ENCODE measurements at regions of chr3 and their contacts with region 1.

Region 1: GRCh38 chr3:112642912-112643506 is 2.1 kb upstream of the CCDC80 start:
- DNase-seq: peak; percentile 92
- ATAC-seq: peak; percentile 67
- H3K4me3 ChIP-seq: no peak overlapping the region
- H3K27ac ChIP-seq: 0 out of 2 replicates have a peak overlapping the region, but pooled peaks have one; percentile 32
- H3K4me1 ChIP-seq: peaks cover 38% of the 10 kb centered on the region
- H3K27me3 ChIP-seq: no peaks in the 10 kb centered on the region
- CTCF ChIP-seq: peak; percentile 98
- POLR2A ChIP-seq: peak; percentile 66; the same call in 1 of the 2 replicates
- RAD21 ChIP-seq: peak; percentile 99

Region 2: DNA sequence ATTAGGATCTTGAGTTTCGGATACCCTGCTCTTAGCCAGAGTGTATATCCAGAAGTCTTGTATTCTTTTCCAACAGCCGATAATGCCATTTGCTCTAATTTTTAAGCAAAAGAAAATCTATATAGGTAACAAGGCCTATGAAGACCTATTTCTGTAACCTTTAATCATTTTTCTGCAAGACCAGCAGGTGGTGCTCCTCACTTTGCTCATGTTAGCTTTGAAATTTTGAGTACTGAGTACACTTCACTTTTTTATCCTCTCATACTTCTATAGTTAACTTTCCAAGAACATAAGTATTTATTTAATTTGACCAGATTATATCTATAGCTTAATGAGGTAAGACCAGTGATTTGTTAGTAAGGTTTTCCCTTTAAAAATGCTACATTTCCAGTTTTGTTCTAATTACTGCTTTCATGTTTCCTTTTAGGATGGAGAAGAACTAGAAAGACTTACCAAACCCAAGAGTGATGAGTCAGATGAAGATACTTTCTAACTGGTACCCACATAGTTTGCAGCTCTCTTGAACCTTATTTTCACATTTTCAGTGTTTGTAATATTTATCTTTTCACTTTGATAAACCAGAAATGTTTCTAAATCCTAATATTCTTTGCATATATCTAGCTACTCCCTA is 60.6 kb before region 1 on chr3:
- CTCF ChIA-PET with region 1: interaction called, 15 read pairs
- POLR2A ChIA-PET with region 1: interaction called, 4 read pairs
- dilution Hi-C with region 1: no loop called
- in situ Hi-C with region 1: loop called (anchors 5 kb)
- intact Hi-C with region 1: loop called (anchors 2 kb)
- DNase-seq: peak; percentile 80
- ATAC-seq: peak; percentile 80
- H3K4me3 ChIP-seq: no peak overlapping the region
- H3K27ac ChIP-seq: no peak overlapping the region
- H3K4me1 ChIP-seq: peaks cover 4% of the 10 kb centered on the region
- H3K27me3 ChIP-seq: no peaks in the 10 kb centered on the region
- CTCF ChIP-seq: peak; percentile 69
- POLR2A ChIP-seq: no peak
- RAD21 ChIP-seq: peak; percentile 80

Region 3: GRCh38 chr3:112685420-112685819 is 42.4 kb after region 1 on chr3:
- CTCF ChIA-PET with region 1: interaction called, 12 read pairs
- POLR2A ChIA-PET with region 1: interaction called, 3 read pairs
- dilution Hi-C with region 1: no loop called
- in situ Hi-C with region 1: loop called (anchors 5 kb)
- intact Hi-C with region 1: no loop called
- DNase-seq: peak; percentile 96
- ATAC-seq: peak; percentile 87
- H3K4me3 ChIP-seq: no peak overlapping the region
- H3K27ac ChIP-seq: peak overlapping the region; percentile 4; the same call in 1 of the 2 replicates
- H3K4me1 ChIP-seq: peaks cover 36% of the 10 kb centered on the region
- H3K27me3 ChIP-seq: no peaks in the 10 kb centered on the region
- CTCF ChIP-seq: no peak
- POLR2A ChIP-seq: no peak
- RAD21 ChIP-seq: peak; percentile 8; the same call in 1 of the 2 replicates

Region 4: GRCh38 chr3:112746675-112747280 is 103.8 kb after region 1 on chr3:
- CTCF ChIA-PET with region 1: no interaction called
- POLR2A ChIA-PET with region 1: interaction called, 11 read pairs
- dilution Hi-C with region 1: no loop called
- in situ Hi-C with region 1: no loop called
- intact Hi-C with region 1: no loop called
- DNase-seq: peak; percentile 77
- ATAC-seq: peak; percentile 72
- H3K4me3 ChIP-seq: no peak overlapping the region
- H3K27ac ChIP-seq: no peak overlapping the region
- H3K4me1 ChIP-seq: peaks cover 2% of the 10 kb centered on the region; the same call in 1 of the 2 replicates
- H3K27me3 ChIP-seq: no peaks in the 10 kb centered on the region
- CTCF ChIP-seq: no peak
- POLR2A ChIP-seq: no peak
- RAD21 ChIP-seq: no peak

Region 5: DNA sequence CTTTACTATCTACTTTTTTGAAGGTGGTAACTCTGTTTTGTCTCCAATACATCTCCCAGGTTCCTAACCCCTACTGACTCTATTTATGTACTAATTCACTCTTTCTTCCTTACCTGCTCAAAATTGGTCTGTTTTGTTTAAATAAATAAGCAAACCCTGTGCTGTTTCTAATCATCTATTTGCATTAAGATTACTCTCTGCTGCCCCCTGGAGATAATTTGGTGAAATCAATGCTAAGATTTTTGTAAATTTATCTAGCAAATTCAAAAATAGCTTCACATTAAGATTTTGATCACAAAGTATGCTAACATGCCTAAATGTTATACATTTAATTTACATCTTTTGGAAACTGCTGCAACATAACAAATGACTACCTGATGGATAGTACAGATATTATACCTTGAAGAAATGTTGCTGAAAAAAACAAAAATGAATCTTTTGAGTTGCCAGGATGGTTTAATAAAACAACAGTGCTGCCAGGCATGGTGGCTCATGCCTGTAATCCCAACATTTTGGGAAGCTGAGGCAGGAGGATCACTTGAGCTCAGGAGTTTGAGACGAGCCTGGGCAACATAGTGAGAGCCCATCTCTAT is 336.3 kb after region 1 on chr3:
- CTCF ChIA-PET with region 1: interaction called, 11 read pairs
- POLR2A ChIA-PET with region 1: no interaction called
- dilution Hi-C with region 1: no loop called
- in situ Hi-C with region 1: no loop called
- intact Hi-C with region 1: loop called (anchors 1 kb)
- DNase-seq: peak; percentile 39
- ATAC-seq: no peak
- H3K4me3 ChIP-seq: no peak overlapping the region
- H3K27ac ChIP-seq: no peak overlapping the region
- H3K4me1 ChIP-seq: peaks cover 3% of the 10 kb centered on the region
- H3K27me3 ChIP-seq: no peaks in the 10 kb centered on the region
- CTCF ChIP-seq: peak; percentile 74
- POLR2A ChIP-seq: no peak
- RAD21 ChIP-seq: peak; percentile 61

Region 6: DNA sequence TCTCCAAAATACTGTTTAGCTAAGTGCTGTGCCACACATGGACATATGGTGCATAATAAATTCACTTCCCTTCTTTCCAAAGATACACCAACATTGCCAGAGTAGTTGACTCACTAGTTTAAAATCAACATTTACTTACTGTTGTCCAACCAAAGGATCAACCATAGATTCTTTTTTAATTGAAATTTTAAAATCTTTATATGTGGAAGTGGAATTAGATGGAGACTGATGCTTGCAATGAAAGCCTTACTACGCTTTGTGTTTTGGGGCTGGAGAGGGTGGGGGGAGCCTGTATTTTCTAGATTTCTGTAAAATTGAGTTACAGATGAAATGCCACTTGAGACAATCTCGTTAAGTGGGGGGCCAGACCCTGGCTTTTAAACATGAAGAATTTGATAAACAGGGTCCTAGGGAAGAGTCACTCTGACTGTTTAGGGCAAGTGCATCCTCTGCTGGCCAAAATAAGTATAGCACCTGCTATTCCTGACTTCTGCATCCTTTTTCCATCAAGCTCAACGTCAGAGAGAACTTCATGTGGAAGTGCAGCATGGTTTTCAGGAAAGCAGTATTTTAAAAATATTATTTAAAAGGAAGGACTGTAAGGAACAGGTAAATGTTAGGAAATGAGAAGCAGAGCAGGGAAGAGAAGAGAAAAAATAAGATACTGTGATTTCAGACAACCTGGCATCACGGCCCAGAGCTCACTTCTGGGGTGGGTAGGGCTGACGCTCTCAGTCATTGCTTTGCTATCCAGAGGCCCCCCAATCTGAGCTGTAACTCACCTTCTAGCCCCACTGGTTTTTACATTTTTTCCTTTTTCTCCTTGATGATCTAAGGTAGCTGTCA is 645.0 kb after region 1 on chr3:
- CTCF ChIA-PET with region 1: interaction called, 5 read pairs
- POLR2A ChIA-PET with region 1: no interaction called
- dilution Hi-C with region 1: no loop called
- in situ Hi-C with region 1: loop called (anchors 25 kb)
- intact Hi-C with region 1: loop called (anchors 5 kb)
- DNase-seq: peak; percentile 72
- ATAC-seq: peak; percentile 64
- H3K4me3 ChIP-seq: no peak overlapping the region
- H3K27ac ChIP-seq: peak overlapping the region; percentile 59
- H3K4me1 ChIP-seq: peaks cover 14% of the 10 kb centered on the region
- H3K27me3 ChIP-seq: peaks cover 14% of the 10 kb centered on the region
- CTCF ChIP-seq: peak; percentile 99
- POLR2A ChIP-seq: peak; percentile 59; the same call in 1 of the 2 replicates
- RAD21 ChIP-seq: peak; percentile 97